K562 (cell line): ENCODE measurements at regions of chr1 and their contacts with region 1.

Region 1: DNA sequence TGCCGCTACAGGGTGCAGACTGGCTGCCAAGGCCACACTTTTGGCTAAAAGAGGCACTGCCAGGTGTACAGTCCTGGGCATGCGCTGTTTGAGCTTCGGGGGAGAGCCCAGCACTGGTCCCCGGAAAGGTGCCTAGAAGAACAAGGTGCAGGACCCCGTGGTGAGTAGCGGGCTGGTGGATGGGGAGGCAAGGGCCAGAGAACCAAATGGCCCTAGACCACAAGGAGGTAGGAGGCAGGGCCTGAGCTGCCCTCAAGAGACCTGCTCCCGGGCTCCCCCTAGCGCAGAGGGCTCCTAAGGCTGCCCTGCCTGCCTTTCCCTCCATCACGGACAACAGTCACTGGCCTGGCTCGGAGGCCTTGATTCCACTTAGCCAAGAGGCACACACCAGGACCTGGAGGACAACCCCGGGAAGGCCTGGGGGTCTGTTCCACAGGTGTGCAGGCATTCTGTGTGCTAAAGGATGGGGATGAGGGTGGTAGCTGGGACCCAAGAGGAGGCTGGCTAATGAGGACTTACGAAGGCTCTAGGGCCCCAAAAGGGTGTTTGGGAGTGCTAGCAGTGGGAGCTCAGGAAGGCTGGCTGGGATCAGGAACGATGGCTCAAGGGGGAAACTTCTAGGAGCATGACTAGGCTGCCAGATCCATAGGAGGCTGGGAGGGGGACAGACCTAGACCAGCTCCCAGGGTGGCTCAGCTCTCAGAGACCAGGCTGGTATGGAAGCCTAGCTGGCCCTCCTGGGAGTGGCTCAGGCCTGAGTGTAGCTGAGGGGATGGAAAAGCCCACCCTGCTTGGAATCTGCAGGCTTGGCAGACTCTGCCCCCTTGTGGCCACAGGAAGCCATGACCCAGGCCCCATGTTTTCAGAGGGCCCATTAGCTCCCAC is 742 bp downstream of the ARTN start:
- DNase-seq: peak; percentile 86 to 90 (median 88)
- ATAC-seq: peak; percentile 95
- H3K4me3 ChIP-seq: no peak overlapping the region
- H3K27ac ChIP-seq: no peak overlapping the region
- H3K4me1 ChIP-seq: peaks cover 12 to 32% of the 10 kb centered on the region in 2 experiments; a peak in 4 of 5 replicates
- H3K27me3 ChIP-seq: no peaks in the 10 kb centered on the region
- CTCF ChIP-seq: peak; percentile 95 to 99 (median 98)
- EP300 ChIP-seq: no peak
- POLR2A ChIP-seq: no peak
- RAD21 ChIP-seq: peak; percentile 89 to 97

Region 2: DNA sequence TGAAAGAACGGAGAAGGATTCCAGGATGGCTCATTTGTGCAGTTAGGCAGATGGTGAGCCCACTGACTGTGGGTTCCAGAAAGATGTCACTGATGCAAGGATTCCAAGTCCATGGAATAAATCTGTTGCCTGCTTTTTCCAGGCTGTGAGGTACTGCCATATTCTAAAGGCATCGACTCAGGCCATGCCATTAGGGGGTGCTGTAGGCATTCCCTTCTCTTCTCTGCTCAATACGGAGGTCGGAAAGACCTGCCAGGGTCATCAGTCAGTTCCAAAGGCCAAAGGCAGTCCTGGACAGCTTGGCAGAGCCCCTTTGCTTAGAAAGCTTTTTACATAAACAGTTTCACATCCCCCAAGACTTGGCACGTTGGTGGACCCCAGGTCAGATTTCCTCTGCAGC is 696.3 kb before region 1 on chr1:
- CTCF ChIA-PET with region 1: no interaction called
- POLR2A ChIA-PET with region 1: no interaction called
- in situ Hi-C with region 1: loop called (anchors 10 kb)
- intact Hi-C with region 1: no loop called
- DNase-seq: peak; percentile 38 to 79 (median 57)
- ATAC-seq: peak; percentile 94
- H3K4me3 ChIP-seq: no peak overlapping the region
- H3K27ac ChIP-seq: no peak overlapping the region
- H3K4me1 ChIP-seq: no peaks in the 10 kb centered on the region
- H3K27me3 ChIP-seq: peaks cover 22 to 66% of the 10 kb centered on the region in 2 experiments
- CTCF ChIP-seq: peak; percentile 79 to 88 (median 87)
- EP300 ChIP-seq: no peak
- POLR2A ChIP-seq: no peak
- RAD21 ChIP-seq: peak; percentile 87 to 95

Region 3: GRCh38 chr1:43763497-43763973 is 170.8 kb before region 1 on chr1:
- CTCF ChIA-PET with region 1: interaction called, 79 read pairs
- POLR2A ChIA-PET with region 1: interaction called, 21 read pairs
- in situ Hi-C with region 1: no loop called
- intact Hi-C with region 1: loop called (anchors 1 kb)
- DNase-seq: peak; percentile 58 to 84 (median 66)
- ATAC-seq: peak; percentile 95
- H3K4me3 ChIP-seq: no peak overlapping the region
- H3K27ac ChIP-seq: no peak overlapping the region
- H3K4me1 ChIP-seq: peaks cover 7 to 26% of the 10 kb centered on the region in 2 experiments; a peak in 3 of 5 replicates
- H3K27me3 ChIP-seq: no peaks in the 10 kb centered on the region
- CTCF ChIP-seq: peak; percentile 92 to 98 (median 92)
- EP300 ChIP-seq: no peak
- POLR2A ChIP-seq: no peak
- RAD21 ChIP-seq: peak; percentile 98

Region 4: DNA sequence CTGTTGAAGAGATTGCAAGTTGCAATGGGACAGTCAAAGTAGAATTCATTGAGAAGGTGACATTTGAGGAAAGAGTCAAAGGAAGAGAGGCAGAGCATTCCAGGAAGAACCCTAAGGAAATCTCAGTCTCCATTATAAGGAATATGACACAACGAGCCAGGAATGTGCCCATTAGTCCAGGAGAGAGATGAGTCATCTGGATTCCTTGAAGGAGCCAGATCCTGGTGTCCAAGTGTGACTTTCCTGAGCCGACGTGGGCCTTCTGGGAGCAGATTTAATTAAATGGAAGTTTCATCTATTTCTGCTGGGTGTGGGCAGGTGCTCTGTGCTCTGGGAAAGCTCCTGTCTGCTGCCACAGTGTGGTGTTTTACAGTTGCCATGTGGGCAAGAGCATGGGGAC is 112.3 kb before region 1 on chr1:
- CTCF ChIA-PET with region 1: no interaction called
- POLR2A ChIA-PET with region 1: no interaction called
- in situ Hi-C with region 1: no loop called
- intact Hi-C with region 1: no loop called
- DNase-seq: no peak
- ATAC-seq: no peak
- H3K4me3 ChIP-seq: no peak overlapping the region
- H3K27ac ChIP-seq: no peak overlapping the region
- H3K4me1 ChIP-seq: no peaks in the 10 kb centered on the region
- H3K27me3 ChIP-seq: no peaks in the 10 kb centered on the region
- CTCF ChIP-seq: no peak
- EP300 ChIP-seq: no peak
- POLR2A ChIP-seq: no peak
- RAD21 ChIP-seq: no peak

Region 5: GRCh38 chr1:43847290-43847689 is 87.1 kb before region 1 on chr1:
- CTCF ChIA-PET with region 1: no interaction called
- POLR2A ChIA-PET with region 1: no interaction called
- in situ Hi-C with region 1: no loop called
- intact Hi-C with region 1: loop called (anchors 5 kb)
- DNase-seq: no peak
- ATAC-seq: no peak
- H3K4me3 ChIP-seq: no peak overlapping the region
- H3K27ac ChIP-seq: no peak overlapping the region
- H3K4me1 ChIP-seq: peaks cover 0 to 2% of the 10 kb centered on the region in 2 experiments; a peak in 1 of 5 replicates
- H3K27me3 ChIP-seq: no peaks in the 10 kb centered on the region
- CTCF ChIP-seq: no peak
- EP300 ChIP-seq: no peak
- POLR2A ChIP-seq: no peak
- RAD21 ChIP-seq: no peak